AG04449 (cell line): ENCODE measurements at regions of chr6 and their contacts with region 1.

Region 1: GRCh38 chr6:30600451-30600961 is 16.5 kb downstream of the PPP1R10 start:
- DNase-seq: no peak
- H3K4me3 ChIP-seq: no peak overlapping the region
- CTCF ChIP-seq: no peak

Region 2: DNA sequence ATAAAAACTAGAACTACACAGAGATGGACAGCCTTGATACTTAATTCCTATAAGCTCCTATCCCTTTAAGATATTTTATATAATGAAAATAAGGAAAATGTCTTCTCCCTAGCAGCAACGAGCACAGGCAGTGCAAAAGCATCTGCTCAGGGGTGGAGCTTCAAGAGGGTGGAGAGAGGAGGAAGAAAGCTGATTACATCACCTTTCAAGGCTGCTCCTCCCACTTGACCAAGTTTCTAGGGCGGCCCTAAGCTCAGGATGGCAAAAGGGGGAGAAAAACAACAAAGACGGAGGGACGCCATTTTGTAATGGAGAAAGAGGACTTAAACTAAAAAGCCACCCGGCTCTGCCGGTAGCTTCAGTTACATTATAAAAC is 14.3 kb after region 1 on chr6:
- CTCF ChIA-PET with region 1: interaction called, 28 read pairs
- POLR2A ChIA-PET with region 1: interaction called, 20 read pairs
- DNase-seq: peak; percentile 87
- H3K4me3 ChIP-seq: peak overlapping the region; percentile 99
- CTCF ChIP-seq: no peak

Region 3: DNA sequence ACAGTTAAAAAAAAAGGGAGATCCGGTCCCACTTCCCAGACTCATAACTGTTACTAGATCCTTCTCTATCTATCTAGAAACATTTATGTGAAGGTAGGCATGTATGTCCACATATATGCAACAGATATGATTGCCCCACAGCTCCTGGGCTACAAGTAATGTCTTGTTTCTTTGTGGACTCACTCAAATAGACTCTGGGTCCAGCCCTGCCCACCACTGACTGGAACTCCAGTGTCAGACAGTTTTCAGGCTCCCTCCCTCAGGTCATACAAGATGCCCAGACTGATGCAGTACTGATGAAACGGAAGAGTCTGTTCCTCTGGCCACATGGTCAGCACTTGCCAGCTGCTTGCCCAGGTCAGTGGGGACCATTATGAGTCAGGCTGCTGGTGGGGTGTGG is 174.6 kb after region 1 on chr6:
- CTCF ChIA-PET with region 1: no interaction called
- POLR2A ChIA-PET with region 1: no interaction called
- DNase-seq: no peak
- H3K4me3 ChIP-seq: no peak overlapping the region
- CTCF ChIP-seq: no peak